PC-3 (cell line): ENCODE measurements at regions of chr1 and their contacts with region 1.

Region 1: DNA sequence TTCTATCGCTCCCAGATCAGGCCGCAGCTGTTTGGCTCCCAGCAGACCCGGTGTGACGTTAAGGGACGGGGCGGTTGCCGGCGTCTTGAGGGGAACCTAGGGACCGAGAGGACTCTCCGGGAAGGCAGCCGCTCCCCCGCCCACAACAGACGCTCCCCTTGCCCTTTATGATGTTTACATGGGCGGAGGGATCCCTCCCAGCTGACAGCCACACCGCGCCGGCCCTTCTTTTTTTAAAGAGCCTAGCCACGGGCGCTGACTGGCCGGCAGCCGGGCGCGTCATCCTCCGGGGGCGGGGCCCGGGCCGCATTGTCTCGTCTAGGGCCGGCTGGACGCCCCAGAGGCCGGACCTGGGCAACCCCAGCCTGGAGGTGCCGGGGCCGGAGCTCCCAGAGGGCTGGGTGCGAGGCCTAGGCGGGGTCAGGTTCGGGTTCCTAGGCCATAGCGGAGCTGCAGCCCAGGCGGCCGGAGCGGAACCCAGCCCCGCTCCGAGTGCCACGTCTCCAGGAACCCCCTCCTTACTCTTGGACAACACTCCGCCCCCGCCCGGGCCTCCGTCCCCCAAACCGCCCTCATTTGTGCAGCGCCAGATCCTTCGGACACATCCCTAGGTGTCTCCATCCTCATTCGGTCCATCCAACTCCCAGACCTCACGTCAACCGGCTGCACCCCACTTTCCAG is at the start of gene PCAT6:
- DNase-seq: peak; percentile 95
- ATAC-seq: peak; percentile 82
- H3K4me3 ChIP-seq: peak within 1 kb of the TSS; percentile 81
- H3K27ac ChIP-seq: no peak within 1 kb of the TSS
- H3K4me1 ChIP-seq: peaks cover 37% of the 10 kb centered on the region
- H3K27me3 ChIP-seq: no peaks in the 10 kb centered on the region
- CTCF ChIP-seq: no peak
- total RNA-seq, gene PCAT6: 0.26 and 1.7 TPM in 2 replicates

Region 2: GRCh38 chr1:202599677-202600431 is 210.9 kb before region 1 on chr1:
- CTCF ChIA-PET with region 1: no interaction called
- POLR2A ChIA-PET with region 1: no interaction called
- intact Hi-C with region 1: no loop called
- DNase-seq: peak; percentile 63
- ATAC-seq: peak; percentile 99
- H3K4me3 ChIP-seq: no peak overlapping the region
- H3K27ac ChIP-seq: no peak overlapping the region
- H3K4me1 ChIP-seq: no peaks in the 10 kb centered on the region
- H3K27me3 ChIP-seq: no peaks in the 10 kb centered on the region
- CTCF ChIP-seq: peak; percentile 79

Region 3: DNA sequence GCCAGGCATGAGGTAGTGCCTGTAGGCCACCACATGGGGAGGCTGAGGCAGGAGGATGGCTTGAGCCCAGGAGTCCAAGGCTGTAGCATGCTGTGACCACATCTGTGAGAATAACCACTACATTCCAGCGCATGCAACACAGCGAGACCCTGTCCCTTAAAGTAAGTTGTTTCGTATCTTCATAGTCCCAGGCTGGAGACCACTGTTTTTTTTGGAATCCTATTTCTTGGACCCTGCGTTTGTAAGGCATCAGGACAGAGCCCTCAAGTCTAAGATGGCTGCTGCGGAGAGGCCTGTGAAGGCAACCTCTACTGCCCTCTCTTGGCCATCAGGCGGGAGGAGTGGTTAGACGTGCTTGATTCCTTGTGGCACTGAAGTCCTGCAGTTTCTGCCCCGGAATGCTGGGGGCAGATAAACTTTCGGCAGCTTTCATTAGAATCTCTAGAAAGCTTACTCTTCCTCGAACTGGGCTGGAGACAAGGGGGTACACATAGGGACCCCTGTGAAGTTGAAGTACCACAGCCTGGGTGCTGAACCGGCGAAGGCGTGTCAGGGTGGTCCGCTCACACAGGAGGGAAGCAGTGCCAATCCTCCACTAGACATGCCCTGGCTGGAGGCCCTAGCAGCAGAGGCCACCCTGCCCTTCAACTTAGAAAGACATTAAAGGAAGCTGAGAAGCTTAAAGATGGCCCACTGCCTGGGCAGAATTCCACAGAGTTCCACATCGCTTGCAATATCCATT is 41.6 kb after region 1 on chr1:
- CTCF ChIA-PET with region 1: no interaction called
- POLR2A ChIA-PET with region 1: no interaction called
- intact Hi-C with region 1: loop called (anchors 2 kb)
- DNase-seq: peak; percentile 70
- ATAC-seq: peak; percentile 93
- H3K4me3 ChIP-seq: no peak overlapping the region
- H3K27ac ChIP-seq: no peak overlapping the region
- H3K4me1 ChIP-seq: no peaks in the 10 kb centered on the region
- H3K27me3 ChIP-seq: no peaks in the 10 kb centered on the region
- CTCF ChIP-seq: peak; percentile 87

Region 4: DNA sequence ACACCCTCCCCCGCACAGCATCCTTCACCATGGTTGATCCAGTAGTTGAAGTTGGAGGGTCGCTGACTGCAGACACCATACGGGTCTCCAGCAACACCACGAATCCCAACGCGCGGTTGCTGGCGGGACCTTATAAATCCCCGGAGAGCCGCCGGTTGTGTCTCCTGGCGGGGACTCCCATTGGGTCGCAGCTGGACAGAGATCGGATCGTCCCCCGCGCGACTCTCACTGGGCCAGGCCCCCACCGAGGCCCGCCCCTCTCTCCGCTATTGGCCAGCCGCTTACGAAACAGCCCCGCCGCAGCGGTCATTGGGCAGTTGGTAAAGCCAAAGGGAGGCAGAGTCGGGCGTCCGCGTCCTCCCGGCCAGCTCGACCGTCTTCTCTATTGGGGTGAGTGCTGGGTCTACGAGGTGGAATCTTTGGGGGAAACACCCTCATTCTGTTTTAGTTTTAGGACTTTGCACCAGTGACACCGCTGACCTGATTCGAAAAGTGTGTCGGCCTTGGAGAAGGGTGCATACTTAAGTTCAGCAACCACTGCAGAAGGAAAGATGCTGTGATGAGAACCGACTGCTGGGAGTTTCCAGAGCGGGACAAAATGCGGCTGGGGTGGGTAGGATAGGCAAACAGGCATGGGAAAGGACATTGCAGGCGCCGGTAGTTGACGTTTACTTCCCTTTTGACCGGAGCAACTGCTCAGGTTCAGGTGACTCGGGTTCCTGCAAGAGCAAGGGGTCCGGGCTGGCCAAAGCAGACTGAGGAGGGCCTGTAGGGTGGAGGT is 50.9 kb after region 1 on chr1:
- CTCF ChIA-PET with region 1: no interaction called
- POLR2A ChIA-PET with region 1: no interaction called
- intact Hi-C with region 1: loop called (anchors 1 kb)
- DNase-seq: peak; percentile 97
- ATAC-seq: peak; percentile 96
- H3K4me3 ChIP-seq: peak overlapping the region; percentile 88
- H3K27ac ChIP-seq: no peak overlapping the region
- H3K4me1 ChIP-seq: peaks cover 14% of the 10 kb centered on the region; the same call in 1 of the 2 replicates
- H3K27me3 ChIP-seq: no peaks in the 10 kb centered on the region
- CTCF ChIP-seq: no peak

Region 5: GRCh38 chr1:202888531-202889360 is 78.0 kb after region 1 on chr1 and contains the start of gene RABIF:
- CTCF ChIA-PET with region 1: no interaction called
- POLR2A ChIA-PET with region 1: no interaction called
- intact Hi-C with region 1: loop called (anchors 2 kb)
- DNase-seq: peak; percentile 98
- ATAC-seq: peak; percentile 94
- H3K4me3 ChIP-seq: peak within 1 kb of the TSS; percentile 92
- H3K27ac ChIP-seq: peak within 1 kb of the TSS; percentile 78
- H3K4me1 ChIP-seq: peaks cover 13% of the 10 kb centered on the region
- H3K27me3 ChIP-seq: no peaks in the 10 kb centered on the region
- CTCF ChIP-seq: no peak; the same call in 1 of the 2 replicates
- total RNA-seq, gene RABIF: 14.8 and 15.5 TPM in 2 replicates

Region 6: DNA sequence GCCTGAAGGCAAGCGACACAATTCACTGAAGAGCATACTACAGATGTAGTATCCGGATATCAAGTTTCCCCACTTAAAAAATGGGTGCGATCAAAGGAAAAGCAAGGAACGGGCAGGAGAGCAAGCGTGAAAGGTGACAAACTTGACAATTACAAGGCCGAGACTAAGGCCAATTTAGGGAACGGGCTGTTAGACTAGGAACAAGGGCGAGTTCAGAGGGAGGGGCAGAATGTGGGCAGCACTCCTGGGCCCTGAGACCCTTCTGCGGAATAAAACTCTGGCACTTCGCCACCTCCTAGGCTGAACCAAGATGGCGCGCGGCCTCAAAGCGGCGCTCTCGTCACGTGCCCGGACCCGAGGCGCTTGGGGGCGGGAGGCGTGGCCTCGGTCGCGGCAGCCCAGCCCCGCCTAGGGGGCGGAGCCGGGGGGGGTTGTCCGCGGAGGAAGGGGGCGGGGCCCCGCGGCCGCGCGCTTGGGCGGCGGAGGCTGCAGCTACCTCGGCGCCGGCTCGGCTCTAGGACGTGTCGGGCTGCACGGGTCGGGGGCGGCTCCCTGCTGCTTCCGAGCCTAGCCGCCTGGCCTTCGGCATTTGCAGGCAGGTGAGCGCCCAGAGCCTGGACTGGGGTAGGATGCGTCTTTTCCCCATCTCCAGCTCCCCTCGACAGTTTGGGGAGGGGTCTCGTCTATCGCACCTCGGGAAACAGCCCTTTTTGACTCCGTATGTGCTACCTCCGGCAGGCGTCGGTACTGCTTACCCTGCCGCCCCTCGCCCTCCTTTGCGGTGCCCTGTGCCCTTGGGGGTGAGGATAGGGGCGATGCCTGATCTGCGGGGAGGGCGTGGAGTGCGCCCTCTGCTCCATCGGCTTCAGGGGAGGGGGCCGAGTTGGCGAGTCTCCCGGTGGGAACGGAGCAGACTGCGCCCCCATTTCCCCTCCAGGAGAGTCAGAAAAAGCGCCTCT is 215.6 kb after region 1 on chr1 and contains the start of gene PPFIA4:
- CTCF ChIA-PET with region 1: interaction called, 14 read pairs
- POLR2A ChIA-PET with region 1: no interaction called
- intact Hi-C with region 1: no loop called
- DNase-seq: peak; percentile 80
- ATAC-seq: peak; percentile 78
- H3K4me3 ChIP-seq: peak within 1 kb of the TSS; percentile 73
- H3K27ac ChIP-seq: no peak within 1 kb of the TSS
- H3K4me1 ChIP-seq: no peaks in the 10 kb centered on the region; the same call in 1 of the 2 replicates
- H3K27me3 ChIP-seq: no peaks in the 10 kb centered on the region
- CTCF ChIP-seq: no peak
- total RNA-seq, gene PPFIA4: 3.4 and 12.1 TPM in 2 replicates